Activated CD4-positive, alpha-beta T cell treated with anti-CD3 and anti-CD28 coated beads for 36 hours (primary cell): ENCODE measurements at regions of chr19 and their contacts with region 1.

Region 1: DNA sequence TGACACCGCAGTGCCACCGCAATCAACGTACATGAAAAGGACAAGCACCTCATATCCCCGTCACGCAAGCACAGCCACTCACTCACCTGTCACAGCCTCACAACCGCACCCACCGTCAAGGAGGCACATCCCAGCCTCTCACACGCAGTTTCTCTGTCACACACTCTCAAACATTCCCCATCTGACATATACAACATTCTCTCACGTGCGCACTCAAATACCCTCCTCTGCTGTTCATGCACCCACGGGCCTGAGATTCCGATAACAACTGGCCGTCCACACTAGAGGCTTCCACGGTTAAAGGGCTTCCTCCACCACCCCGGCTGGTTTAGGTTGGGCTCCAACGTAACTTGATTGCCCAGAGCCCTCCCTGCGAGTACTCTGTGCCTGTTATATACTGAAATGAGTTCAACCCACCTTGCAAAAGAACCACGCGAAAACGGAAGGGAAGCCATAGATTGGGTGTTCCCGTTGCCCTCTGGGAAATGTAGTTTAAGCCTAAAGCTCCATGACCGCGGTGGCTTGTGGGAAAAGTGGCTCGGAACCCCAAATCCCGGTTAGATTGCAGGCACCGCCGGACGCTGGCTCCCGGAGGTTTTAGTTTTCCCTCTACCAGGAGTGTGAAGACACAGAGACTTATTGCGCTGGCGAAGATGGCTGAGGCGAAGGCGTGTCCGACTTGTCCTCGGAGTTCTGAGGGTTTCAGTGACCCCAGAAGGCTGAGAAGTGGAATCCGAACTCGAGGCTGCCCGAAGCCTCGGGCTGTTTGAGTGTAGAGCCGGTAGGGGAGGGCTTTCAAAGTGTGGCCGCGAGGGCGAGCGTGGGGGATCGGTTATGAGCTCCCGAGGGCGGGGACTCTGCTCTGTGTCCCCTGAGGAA is at the start of gene ZNF573:
- DNase-seq: peak; percentile 90
- ATAC-seq: peak; percentile 94
- H3K4me3 Mint-ChIP-seq: peak within 1 kb of the TSS; percentile 95
- H3K27ac Mint-ChIP-seq: peak within 1 kb of the TSS; percentile 96
- H3K4me1 Mint-ChIP-seq: peaks cover 22% of the 10 kb centered on the region
- H3K27me3 Mint-ChIP-seq: no peaks in the 10 kb centered on the region
- total RNA-seq, gene ZNF573: 8.9 to 9.7 TPM

Region 2: DNA sequence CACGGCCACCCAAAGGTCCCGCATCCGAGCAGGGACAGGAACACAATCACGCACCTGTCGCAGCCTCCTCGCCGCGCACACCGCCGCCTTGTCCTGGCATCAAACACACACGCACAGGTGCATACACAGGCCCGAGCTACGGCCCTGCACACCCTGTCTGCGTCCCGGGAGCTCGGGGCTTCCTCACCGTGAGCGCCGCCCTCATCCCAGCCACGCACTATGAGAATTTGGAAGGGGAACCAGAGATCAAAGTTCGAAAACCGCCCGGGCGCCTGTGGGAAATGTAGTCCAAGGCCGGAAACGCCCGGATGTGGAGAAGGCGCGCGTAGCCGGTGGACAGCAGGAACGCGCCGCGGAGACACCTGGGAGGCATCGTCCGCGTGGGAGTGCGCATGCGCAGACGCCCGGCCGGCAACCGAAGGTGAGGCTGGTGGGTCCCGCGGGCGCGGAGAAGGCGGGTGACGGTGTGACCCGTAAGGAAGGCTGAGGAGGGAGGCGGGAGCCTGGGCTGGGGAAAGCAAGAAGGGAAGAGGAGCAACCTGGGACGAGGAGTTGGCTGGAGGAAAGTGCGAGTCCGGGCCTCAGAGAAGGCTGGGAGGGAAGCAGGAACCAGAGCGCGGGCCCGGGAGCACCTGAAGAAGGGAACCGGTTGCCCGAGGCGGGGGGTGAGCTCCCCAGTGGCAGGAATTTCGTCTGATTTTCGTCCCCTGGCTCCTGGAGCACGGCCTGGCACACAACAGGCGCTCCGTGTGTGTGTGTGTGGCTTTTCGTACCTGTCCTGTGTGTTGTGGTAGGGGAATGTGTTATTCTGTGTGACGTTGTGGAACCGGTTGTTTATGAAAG is 1091.9 kb before region 1 on chr19 and contains the start of gene ZNF567:
- CTCF ChIA-PET with region 1: no interaction called
- POLR2A ChIA-PET with region 1: no interaction called
- intact Hi-C with region 1: loop called in 1 of 2 experiments (anchors 5 kb)
- DNase-seq: peak; percentile 99
- ATAC-seq: peak; percentile 93
- H3K4me3 Mint-ChIP-seq: peak within 1 kb of the TSS; percentile 99
- H3K27ac Mint-ChIP-seq: peak within 1 kb of the TSS; percentile 96
- H3K4me1 Mint-ChIP-seq: peaks cover 27% of the 10 kb centered on the region
- H3K27me3 Mint-ChIP-seq: no peaks in the 10 kb centered on the region
- total RNA-seq, gene ZNF567: 7.4 to 8.6 TPM

Region 3: GRCh38 chr19:37217855-37218591 is 561.3 kb before region 1 on chr19 and contains the start of gene ZNF383:
- CTCF ChIA-PET with region 1: no interaction called
- POLR2A ChIA-PET with region 1: no interaction called
- intact Hi-C with region 1: loop called in 1 of 2 experiments (anchors 5 kb)
- DNase-seq: peak; percentile 89
- ATAC-seq: peak; percentile 87
- H3K4me3 Mint-ChIP-seq: peak within 1 kb of the TSS; percentile 93
- H3K27ac Mint-ChIP-seq: peak within 1 kb of the TSS; percentile 99
- H3K4me1 Mint-ChIP-seq: peaks cover 24% of the 10 kb centered on the region
- H3K27me3 Mint-ChIP-seq: no peaks in the 10 kb centered on the region
- total RNA-seq, gene ZNF383: 8.5 to 9.2 TPM

Region 4: DNA sequence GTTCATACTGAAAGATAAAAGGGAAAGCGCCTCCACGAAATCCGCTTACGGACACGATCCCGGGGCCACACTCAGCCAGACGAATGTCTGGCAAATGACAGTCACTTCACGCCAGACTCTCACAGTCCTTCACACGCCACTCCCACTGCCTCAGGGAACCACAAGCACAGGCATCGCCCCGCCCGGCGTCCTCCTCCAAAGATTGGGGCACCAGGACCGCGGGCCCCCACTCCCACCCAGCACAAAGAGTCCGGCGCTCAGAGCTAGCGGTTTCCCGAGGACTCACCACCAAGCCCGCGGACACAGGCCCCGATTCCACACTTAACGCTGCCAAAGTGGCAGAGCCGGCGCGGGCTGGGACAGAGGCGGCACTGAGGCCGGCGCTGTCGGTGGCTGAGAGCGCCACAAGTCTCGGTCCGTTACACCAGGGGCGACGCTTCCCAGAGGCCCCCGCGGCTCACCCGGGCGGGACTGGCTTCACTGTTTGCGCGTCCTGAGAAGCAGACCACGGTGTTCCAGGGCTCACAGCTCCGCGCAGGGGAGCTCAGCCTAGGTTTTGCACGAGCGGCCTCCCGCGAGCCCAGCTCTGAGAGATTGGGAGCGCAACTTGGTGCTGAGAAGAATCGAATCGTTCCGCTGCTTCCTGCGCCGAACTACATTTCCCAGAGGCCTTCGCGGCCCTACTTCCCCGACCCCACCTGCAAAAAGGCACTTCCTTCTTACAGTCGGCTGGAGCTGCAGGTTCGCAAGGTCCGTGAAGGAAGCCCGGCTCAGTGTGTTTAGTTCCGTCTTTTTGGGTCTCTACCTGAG is 312.4 kb before region 1 on chr19 and contains the start of gene ZNF569:
- CTCF ChIA-PET with region 1: no interaction called
- POLR2A ChIA-PET with region 1: no interaction called
- intact Hi-C with region 1: loop called in 1 of 2 experiments (anchors 1 kb)
- DNase-seq: peak; percentile 93
- ATAC-seq: peak; percentile 71
- H3K4me3 Mint-ChIP-seq: peak within 1 kb of the TSS; percentile 94
- H3K27ac Mint-ChIP-seq: peak within 1 kb of the TSS; percentile 95
- H3K4me1 Mint-ChIP-seq: peaks cover 31% of the 10 kb centered on the region
- H3K27me3 Mint-ChIP-seq: no peaks in the 10 kb centered on the region
- total RNA-seq, gene ZNF569: 7.4 to 9.1 TPM

Region 5: DNA sequence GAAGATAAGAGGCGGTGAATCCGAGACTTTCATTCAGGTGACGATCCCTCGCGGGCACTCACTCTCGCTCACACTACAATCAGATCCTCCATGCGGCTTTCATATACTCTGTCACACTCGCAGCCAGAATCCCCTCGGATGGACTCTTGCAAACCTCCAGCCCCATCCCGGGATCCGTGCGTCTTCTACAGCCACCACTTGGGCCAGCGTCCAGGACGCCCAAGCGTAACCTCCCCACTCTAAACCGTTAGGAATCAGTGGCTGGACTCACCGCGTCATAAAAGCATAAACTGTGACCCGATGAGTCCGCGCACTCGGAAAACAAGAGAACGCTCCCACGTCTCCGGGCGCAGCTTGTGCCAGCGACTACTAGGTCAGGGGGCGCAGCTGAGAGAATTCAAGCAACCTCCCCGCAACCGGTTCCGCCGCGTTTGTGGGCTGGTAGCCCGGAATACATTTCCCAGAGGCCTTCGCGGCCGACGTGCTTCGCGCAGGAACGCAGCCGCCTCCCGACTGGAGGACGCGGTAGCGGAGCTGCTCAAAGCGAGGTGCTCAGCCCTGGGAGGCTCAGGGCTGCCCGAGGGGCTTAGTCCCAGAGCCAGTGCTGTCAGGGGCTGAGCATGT is 87.4 kb before region 1 on chr19:
- CTCF ChIA-PET with region 1: no interaction called
- POLR2A ChIA-PET with region 1: no interaction called
- intact Hi-C with region 1: loop called in 1 of 2 experiments (anchors 1 kb)
- DNase-seq: peak; percentile 93
- ATAC-seq: peak; percentile 96
- H3K4me3 Mint-ChIP-seq: peak overlapping the region; percentile 92
- H3K27ac Mint-ChIP-seq: peak overlapping the region; percentile 95
- H3K4me1 Mint-ChIP-seq: peaks cover 9% of the 10 kb centered on the region
- H3K27me3 Mint-ChIP-seq: no peaks in the 10 kb centered on the region

Region 6: DNA sequence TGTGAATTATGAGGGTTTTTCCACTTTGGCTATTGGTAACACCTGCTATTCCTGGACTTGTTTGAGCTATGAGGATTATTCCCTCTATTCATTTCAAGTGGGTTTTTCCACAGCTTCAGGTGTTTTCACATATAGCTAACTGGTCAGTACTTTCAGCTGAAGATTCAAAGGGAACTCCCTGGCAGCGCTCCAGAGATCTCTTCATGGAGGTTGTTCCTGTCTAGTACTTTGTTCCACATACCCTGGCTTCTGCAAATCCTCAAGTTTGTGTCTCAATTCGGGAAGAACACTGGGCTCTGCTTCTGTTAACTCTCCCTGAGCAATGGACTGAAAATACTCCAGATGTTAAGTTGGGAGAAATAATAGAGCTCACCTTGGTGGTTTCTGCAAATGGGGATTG is 54.2 kb before region 1 on chr19:
- CTCF ChIA-PET with region 1: no interaction called
- POLR2A ChIA-PET with region 1: no interaction called
- intact Hi-C with region 1: no loop called
- DNase-seq: no peak
- ATAC-seq: no peak
- H3K4me3 Mint-ChIP-seq: no peak overlapping the region
- H3K27ac Mint-ChIP-seq: no peak overlapping the region
- H3K4me1 Mint-ChIP-seq: no peaks in the 10 kb centered on the region
- H3K27me3 Mint-ChIP-seq: no peaks in the 10 kb centered on the region

Region 7: DNA sequence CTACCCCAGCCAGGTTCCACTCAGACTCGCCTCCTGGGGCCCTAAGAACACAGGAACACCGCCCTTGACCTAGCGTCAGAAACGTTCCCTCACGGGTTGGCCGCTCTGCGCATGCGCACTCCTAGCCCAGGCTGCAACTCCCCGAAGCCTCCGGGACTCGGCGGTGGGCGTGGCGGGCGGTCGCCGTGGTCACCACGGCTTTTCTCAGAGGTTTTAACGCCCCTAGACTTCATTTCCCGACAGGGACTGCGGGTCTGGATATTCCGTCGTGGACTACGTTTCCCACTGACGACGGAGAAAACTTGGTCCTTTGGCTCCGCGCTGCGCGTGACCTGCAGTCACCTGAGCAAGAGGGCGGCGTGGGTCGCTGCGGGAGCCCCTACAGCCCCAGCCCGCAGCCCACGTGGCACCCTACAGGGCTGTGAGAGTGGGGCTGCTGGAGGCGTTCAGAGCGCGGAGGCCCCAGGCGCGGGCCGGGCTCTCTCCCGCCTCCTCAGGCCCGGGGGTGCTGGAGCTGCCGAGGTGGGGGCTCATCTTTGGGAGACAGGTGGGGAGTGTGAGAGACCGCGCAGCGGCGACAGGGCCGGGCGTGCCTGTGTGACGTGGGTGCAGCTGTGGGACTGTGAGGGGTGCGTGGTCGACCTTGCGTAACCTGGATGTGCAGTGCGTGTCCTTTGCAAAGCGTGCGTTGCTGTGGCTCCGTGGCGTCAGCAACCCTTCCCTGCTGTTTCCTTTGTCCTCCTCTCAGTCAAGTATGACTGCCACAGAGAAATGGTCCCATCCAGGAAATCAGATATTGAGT is 38.0 kb after region 1 on chr19:
- CTCF ChIA-PET with region 1: no interaction called
- POLR2A ChIA-PET with region 1: no interaction called
- intact Hi-C with region 1: no loop called
- DNase-seq: peak; percentile 75
- ATAC-seq: peak; percentile 47
- H3K4me3 Mint-ChIP-seq: peak overlapping the region; percentile 36
- H3K27ac Mint-ChIP-seq: peak overlapping the region; percentile 8
- H3K4me1 Mint-ChIP-seq: peaks cover 8% of the 10 kb centered on the region
- H3K27me3 Mint-ChIP-seq: peaks cover 13% of the 10 kb centered on the region

Region 8: DNA sequence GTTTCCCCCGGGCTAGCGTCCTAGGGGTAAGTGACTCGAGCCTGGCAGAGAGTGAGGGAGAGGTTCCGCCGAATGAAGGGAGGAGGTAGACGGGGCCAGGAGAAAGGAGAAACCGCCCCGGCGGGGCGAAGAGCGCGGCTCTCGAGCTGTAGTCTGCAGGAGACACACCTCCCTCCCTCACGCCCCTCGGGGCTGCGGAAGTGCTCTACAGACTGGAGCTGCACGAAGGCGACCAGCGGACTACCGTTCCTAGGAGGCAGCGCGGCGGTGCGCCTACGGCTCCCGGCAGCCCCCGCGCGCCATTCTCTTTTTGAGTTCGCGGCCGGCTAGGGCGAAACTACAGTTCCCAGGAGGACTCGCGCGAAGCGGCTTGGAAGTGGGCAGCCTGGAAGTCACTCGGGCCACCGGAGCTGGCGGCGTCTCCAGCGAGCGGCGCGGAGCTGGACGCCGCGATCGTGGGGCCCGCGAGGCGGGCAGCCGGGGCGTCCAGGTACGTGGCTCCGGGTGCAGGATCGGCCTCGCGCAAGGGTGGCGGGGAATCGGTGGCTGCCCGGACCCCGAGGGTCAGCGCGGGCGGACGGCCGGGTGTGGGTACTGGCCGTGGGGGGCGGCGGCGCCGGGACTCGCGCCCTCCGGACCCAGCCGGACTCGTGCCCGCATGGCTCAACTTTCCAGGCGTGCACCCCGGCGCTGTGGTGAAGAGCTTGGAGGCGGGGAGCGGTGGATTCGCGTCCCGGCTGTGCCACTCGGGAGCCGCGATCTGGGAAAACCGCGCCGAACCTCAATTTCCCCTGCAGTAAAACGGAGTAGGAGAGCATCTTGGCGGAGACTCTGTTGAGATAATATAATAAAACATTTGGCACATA is 127.7 kb after region 1 on chr19 and contains the start of gene SIPA1L3:
- CTCF ChIA-PET with region 1: interaction called, 3 read pairs
- POLR2A ChIA-PET with region 1: no interaction called
- intact Hi-C with region 1: loop called in 1 of 2 experiments (anchors 1 kb)
- DNase-seq: peak; percentile 97
- ATAC-seq: peak; percentile 98
- H3K4me3 Mint-ChIP-seq: peak within 1 kb of the TSS; percentile 73
- H3K27ac Mint-ChIP-seq: peak within 1 kb of the TSS; percentile 74
- H3K4me1 Mint-ChIP-seq: peaks cover 20% of the 10 kb centered on the region
- H3K27me3 Mint-ChIP-seq: no peaks in the 10 kb centered on the region
- total RNA-seq, gene SIPA1L3: 10.5 to 18.3 TPM